HEK293 (cell line): ENCODE measurements at regions of chr1 and their contacts with region 1.

Region 1: GRCh38 chr1:152459596-152460528 is 45.8 kb upstream of the CRNN start:
- H3K4me3 ChIP-seq: no peak overlapping the region
- H3K27ac ChIP-seq: no peak overlapping the region
- H3K4me1 ChIP-seq: no peaks in the 10 kb centered on the region
- CTCF ChIP-seq: 0 out of 2 replicates have a peak, but pooled peaks have one; percentile 30

Region 2: DNA sequence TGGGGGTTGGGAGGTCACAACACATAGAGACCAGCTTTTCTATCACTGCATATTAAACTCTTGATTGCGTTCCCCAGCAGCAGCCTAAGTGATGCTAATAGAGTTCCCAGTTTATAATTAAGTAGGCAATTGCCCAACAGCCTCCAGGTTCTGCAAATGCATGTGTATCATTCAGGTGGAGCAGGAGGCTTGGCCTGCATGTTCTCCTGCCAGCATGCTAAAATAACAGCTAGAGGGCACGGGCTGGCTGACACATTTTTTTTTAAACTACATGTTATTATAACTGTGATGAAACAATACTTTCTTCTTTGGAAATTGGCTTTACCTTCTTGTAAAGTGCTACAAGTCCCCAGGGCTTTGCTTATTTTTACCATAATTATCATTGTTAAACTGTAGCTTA is 355.0 kb before region 1 on chr1:
- CTCF ChIA-PET with region 1: interaction called, 12 read pairs
- POLR2A ChIA-PET with region 1: no interaction called
- H3K4me3 ChIP-seq: no peak overlapping the region
- H3K27ac ChIP-seq: no peak overlapping the region
- H3K4me1 ChIP-seq: peaks cover 4% of the 10 kb centered on the region; the same call in 1 of the 2 replicates
- CTCF ChIP-seq: no peak

Region 3: DNA sequence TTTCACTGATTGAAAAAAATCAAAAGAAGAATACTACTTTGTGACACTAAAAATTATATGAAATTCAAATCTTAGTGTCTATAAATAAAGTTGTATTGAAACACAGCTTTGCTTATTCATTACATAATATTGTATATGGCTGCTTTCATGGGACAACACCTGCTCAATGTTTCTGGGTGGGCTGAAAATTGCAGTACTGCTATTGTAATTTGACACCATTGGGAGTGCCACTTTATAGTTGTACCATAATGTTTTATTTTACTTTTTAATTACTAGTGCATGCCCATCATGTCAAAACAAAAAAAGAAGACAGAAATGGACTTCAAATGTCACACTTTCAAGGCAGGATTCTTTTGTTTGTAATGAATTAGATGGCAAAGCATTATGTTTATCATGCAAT is 284.3 kb before region 1 on chr1:
- CTCF ChIA-PET with region 1: interaction called, 31 read pairs
- POLR2A ChIA-PET with region 1: no interaction called
- H3K4me3 ChIP-seq: no peak overlapping the region
- H3K27ac ChIP-seq: no peak overlapping the region
- H3K4me1 ChIP-seq: no peaks in the 10 kb centered on the region
- CTCF ChIP-seq: no peak

Region 4: GRCh38 chr1:152227310-152227928 is 232.4 kb before region 1 on chr1:
- CTCF ChIA-PET with region 1: interaction called, 13 read pairs
- POLR2A ChIA-PET with region 1: no interaction called
- H3K4me3 ChIP-seq: no peak overlapping the region
- H3K27ac ChIP-seq: no peak overlapping the region
- H3K4me1 ChIP-seq: no peaks in the 10 kb centered on the region
- CTCF ChIP-seq: no peak

Region 5: DNA sequence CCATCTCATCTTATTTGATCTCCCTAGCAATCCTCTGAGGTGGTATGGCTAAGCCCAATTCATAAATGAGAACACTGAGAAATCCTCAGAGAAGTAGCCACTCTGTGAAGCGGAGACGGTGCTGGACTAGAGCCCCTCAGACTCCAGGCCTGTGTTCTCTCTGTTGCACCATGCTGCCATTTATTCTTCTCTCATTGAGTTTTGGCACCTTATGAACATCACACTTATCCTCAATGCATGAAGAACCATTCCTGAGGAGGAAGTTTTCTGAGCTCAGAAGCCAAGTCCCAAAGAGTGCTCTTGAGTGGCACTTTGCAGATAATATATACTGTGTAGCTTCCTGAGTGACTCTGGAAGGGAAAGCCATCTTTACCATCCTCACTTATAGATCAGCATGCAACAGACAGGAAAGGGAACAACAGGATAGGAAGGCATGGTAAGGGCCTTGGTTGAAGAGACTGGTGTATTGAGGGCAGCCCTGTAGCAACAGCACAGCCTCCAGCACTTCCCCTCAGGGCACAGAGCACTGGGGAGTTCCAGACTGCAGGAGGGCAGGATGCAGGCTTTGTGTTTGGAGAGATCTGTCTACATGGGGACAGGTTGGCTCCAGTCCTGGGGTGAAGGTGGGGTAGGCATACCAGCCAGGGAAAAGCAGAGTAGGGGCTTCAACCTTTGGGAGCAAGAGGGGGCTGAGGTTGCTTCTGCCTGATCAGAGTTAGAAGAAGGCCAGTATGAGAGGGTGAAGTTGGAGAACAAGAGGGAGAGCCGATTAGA is 44.2 kb before region 1 on chr1:
- CTCF ChIA-PET with region 1: interaction called, 10 read pairs
- POLR2A ChIA-PET with region 1: no interaction called
- H3K4me3 ChIP-seq: no peak overlapping the region
- H3K27ac ChIP-seq: no peak overlapping the region
- H3K4me1 ChIP-seq: peaks cover 2% of the 10 kb centered on the region; the same call in 1 of the 2 replicates
- CTCF ChIP-seq: no peak

Region 6: DNA sequence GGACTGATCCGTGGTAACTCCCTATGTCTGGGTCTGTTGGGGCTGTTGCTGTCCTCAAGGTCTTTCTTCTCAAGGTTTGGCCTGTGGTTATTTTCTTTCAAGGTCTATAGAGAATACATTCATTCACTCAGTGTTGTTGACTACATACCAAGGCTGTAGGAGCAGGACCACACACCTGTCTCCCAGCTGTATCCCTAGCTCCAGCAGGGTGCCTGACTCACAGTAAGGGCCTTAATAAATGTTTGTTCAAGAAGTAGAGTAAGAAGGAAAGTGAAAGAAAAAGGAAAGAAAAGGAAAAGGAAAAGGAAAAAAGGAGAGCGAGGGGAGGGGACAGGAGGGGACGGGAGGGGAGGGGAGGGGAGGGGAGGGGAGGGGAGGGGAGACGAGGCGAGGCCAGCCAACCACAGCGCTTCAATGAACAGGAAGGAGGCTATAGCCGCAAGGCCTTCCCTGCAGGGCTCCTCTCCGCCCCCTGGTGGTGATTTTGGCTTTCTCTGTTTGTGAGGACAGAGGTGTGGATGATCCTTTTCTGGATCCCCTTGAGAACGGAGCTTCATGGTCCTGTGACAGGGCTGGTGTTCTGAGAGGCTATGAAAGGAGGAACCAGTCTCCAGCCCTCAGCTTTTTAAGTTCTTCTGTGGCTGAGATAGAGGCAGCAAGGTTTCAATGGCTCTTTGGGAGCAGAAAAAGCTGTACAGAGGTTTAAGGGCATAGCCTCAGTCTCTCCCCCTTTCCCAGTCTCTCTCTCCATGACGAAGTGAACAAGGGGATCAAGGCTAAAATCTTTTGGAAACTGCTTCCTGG is 20.1 kb after region 1 on chr1:
- CTCF ChIA-PET with region 1: interaction called, 10 read pairs
- POLR2A ChIA-PET with region 1: no interaction called
- H3K4me3 ChIP-seq: no peak overlapping the region
- H3K27ac ChIP-seq: no peak overlapping the region
- H3K4me1 ChIP-seq: no peaks in the 10 kb centered on the region
- CTCF ChIP-seq: no peak